ENCODE measurements at regions of chr3 and their contacts with region 1.

Region 1: DNA sequence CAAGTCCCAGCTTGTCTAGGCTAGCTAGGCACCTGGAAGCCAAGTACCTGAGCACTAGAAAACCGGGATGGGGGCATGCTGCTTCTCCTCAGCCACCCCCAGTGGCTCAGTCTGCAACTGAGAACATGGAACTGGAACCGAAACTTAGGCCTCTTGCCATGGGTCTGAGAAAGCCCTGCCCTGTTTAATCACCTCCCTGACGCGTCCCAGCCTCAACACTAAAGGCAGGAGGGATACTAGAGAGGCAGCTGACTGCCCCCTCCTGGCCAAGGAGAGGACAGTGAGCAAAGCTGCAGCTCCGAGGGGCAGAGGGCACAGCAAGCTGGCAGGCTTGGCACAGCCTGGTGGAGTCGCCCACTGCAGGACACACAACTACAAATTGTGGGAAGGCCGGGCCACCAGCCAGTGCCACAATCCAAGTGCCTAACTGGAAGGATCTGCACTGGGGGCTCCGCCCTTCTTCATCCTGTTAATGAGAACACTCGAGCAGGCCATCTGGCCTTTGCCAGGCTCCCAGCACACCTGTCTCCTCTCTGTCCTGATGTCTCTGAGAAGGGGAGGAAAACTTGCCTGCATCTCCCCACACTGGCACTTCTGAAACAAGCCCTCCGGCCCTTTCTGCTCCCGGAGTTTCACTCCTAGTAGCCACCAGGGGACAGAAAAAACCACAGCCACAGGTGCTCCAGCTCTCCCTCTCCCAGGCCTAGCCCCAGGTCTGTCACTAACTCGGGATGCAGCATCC is 53.7 kb downstream of the BDH1 start:
- DNase-seq: peak; percentile 64
- H3K4me3 ChIP-seq: no peak overlapping the region
- H3K27ac ChIP-seq: no peak overlapping the region
- H3K4me1 ChIP-seq: no peaks in the 10 kb centered on the region
- H3K27me3 ChIP-seq: no peaks in the 10 kb centered on the region
- CTCF ChIP-seq: peak; percentile 74 to 78
- POLR2A ChIP-seq: no peak

Region 2: GRCh38 chr3:197117092-197117491 is 385.0 kb before region 1 on chr3:
- CTCF ChIA-PET with region 1: no interaction called
- POLR2A ChIA-PET with region 1: no interaction called
- dilution Hi-C with region 1: no loop called
- intact Hi-C with region 1: no loop called
- DNase-seq: no peak
- H3K4me3 ChIP-seq: no peak overlapping the region
- H3K27ac ChIP-seq: no peak overlapping the region
- H3K4me1 ChIP-seq: no peaks in the 10 kb centered on the region
- H3K27me3 ChIP-seq: no peaks in the 10 kb centered on the region
- CTCF ChIP-seq: no peak
- POLR2A ChIP-seq: no peak

Region 3: DNA sequence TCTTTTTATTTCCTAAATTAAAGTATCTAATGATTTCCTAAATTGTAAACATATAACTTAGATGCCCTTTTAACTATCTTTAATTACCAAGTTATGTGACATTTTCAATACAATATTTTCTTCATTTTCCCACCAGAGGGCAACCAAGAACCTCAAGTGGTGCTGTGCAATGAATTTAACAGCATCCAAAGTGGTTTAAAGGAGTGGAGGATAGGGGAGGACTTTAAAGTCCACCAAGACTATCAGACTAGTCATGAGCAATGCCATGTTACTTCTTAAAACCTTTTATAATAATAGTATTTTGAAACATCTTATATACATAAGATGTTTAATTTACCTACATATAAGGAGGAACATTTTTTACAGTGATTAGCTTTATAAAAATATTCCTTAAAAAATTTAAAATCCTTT is 278.0 kb before region 1 on chr3:
- CTCF ChIA-PET with region 1: interaction called, 61 read pairs
- POLR2A ChIA-PET with region 1: no interaction called
- dilution Hi-C with region 1: no loop called
- intact Hi-C with region 1: loop called (anchors 1 kb)
- DNase-seq: peak; percentile 64
- H3K4me3 ChIP-seq: no peak overlapping the region
- H3K27ac ChIP-seq: no peak overlapping the region
- H3K4me1 ChIP-seq: no peaks in the 10 kb centered on the region
- H3K27me3 ChIP-seq: no peaks in the 10 kb centered on the region
- CTCF ChIP-seq: peak; percentile 26
- POLR2A ChIP-seq: no peak

Region 4: GRCh38 chr3:197292083-197292646 is 209.9 kb before region 1 on chr3:
- CTCF ChIA-PET with region 1: interaction called, 48 read pairs
- POLR2A ChIA-PET with region 1: no interaction called
- dilution Hi-C with region 1: no loop called
- intact Hi-C with region 1: loop called (anchors 2 kb)
- DNase-seq: no peak
- H3K4me3 ChIP-seq: no peak overlapping the region
- H3K27ac ChIP-seq: no peak overlapping the region
- H3K4me1 ChIP-seq: peaks cover 19% of the 10 kb centered on the region
- H3K27me3 ChIP-seq: no peaks in the 10 kb centered on the region
- CTCF ChIP-seq: no peak
- POLR2A ChIP-seq: no peak

Region 5: GRCh38 chr3:197364410-197365071 is 137.5 kb before region 1 on chr3:
- CTCF ChIA-PET with region 1: interaction called, 11 read pairs
- POLR2A ChIA-PET with region 1: no interaction called
- dilution Hi-C with region 1: no loop called
- intact Hi-C with region 1: no loop called
- DNase-seq: peak; percentile 17
- H3K4me3 ChIP-seq: no peak overlapping the region
- H3K27ac ChIP-seq: no peak overlapping the region
- H3K4me1 ChIP-seq: peaks cover 11% of the 10 kb centered on the region
- H3K27me3 ChIP-seq: no peaks in the 10 kb centered on the region
- CTCF ChIP-seq: no peak
- POLR2A ChIP-seq: no peak

Region 6: DNA sequence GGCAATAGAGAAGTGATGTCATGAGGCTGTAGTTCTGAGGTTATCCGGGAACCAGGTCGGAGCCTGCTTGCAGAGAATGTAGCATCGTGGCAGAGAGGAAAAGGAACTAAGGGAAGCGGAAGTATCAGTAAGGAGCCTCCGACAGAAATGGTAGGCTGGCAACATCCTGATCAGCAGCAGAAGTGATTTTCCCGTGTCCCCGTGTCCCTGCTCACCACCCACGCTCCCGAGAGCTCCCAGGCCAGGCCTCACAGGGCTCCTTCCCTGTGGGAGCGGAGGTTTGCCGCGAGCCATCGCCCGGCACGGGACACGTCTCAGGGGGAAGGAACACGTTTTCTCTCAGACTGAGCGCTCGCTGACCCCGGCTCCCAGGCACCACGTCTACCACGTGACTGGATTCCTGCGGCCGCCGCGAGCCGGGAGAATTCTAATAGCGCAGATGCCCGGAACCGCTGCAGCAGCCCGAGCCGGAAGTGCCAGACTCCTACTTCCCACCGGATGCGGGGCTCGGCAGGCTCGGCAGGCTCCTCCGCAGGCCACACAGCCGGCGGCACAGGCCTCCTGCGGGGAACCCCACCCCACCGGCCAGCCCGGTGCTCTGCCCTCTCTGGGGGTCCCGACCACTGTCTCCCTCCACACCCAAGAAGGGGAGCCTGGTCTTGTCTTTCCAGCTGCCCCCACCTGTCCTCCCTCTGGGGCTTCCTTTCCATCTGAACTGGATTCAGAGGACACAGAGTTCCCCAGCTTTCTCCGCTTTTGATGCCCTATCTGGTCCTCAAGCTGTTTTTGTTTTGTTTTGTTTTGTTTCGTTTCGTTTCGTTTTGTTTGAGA is 45.6 kb before region 1 on chr3:
- CTCF ChIA-PET with region 1: interaction called, 10 read pairs
- POLR2A ChIA-PET with region 1: no interaction called
- dilution Hi-C with region 1: no loop called
- intact Hi-C with region 1: no loop called
- DNase-seq: peak; percentile 77
- H3K4me3 ChIP-seq: peak overlapping the region in 2 of 3 experiments; percentile 12 to 35
- H3K27ac ChIP-seq: peak overlapping the region; percentile 47
- H3K4me1 ChIP-seq: peaks cover 11% of the 10 kb centered on the region
- H3K27me3 ChIP-seq: no peaks in the 10 kb centered on the region
- CTCF ChIP-seq: no peak
- POLR2A ChIP-seq: peak; percentile 89

Region 7: GRCh38 chr3:197516517-197516889 is 14.5 kb after region 1 on chr3:
- CTCF ChIA-PET with region 1: interaction called, 11 read pairs
- POLR2A ChIA-PET with region 1: no interaction called
- dilution Hi-C with region 1: no loop called
- intact Hi-C with region 1: no loop called
- DNase-seq: peak; percentile 34
- H3K4me3 ChIP-seq: no peak overlapping the region
- H3K27ac ChIP-seq: peak overlapping the region; percentile 27
- H3K4me1 ChIP-seq: peaks cover 6% of the 10 kb centered on the region
- H3K27me3 ChIP-seq: no peaks in the 10 kb centered on the region
- CTCF ChIP-seq: no peak
- POLR2A ChIP-seq: no peak